H1 (cell line): ENCODE measurements at regions of chr1 and their contacts with region 1.

Region 1: DNA sequence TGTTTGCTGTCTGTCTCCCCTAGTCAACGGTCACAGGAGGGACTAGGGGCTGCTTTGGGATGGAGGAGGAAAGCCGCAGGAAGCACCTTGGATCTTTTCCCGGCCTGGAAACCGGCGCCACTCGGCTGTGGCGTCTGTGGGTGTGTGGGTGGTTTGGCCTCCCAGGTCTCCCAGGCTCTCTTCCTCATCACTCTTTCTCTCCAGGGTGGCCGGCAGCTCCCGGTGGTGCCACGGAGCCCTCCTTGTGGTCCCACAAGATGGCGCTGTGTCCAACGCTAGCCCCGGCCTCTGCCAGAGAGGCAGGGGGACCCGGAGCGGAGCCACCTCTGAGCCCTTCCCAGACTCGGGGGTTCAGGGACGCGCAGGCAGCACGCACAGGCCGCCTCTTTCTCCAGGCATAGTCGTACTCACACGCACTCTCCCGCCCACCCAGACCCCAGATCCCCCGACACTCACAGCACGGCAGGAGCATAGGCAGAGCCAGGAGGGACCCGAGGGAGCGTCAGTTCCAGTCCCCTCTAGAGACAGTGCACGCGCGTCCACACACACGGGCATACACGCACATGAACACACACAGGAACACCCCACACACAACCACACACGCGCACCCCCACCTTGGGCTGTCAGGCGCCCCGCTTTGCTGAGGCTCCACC is 31.2 kb downstream of the CDCP2 start:
- DNase-seq: peak; percentile 56 to 94
- H3K4me3 ChIP-seq: peak overlapping the region; percentile 1 to 45 (median 17); a peak in 5 of 8 replicates
- H3K27ac ChIP-seq: no peak overlapping the region
- H3K4me1 ChIP-seq: peaks cover 7 to 24% (median 15%) of the 10 kb centered on the region in 4 experiments
- H3K27me3 ChIP-seq: peaks cover 0 to 11% (median 8%) of the 10 kb centered on the region in 4 experiments; a peak in 5 of 7 replicates
- CTCF ChIP-seq: peak; percentile 78 to 85 (median 84)
- EP300 ChIP-seq: no peak
- POLR2A ChIP-seq: peak in 1 of 2 experiments; percentile 36; a peak in 1 of 3 replicates
- RAD21 ChIP-seq: peak; percentile 83 to 92

Region 2: GRCh38 chr1:54016313-54017262 is 105.0 kb before region 1 on chr1:
- CTCF ChIA-PET with region 1: no interaction called
- POLR2A ChIA-PET with region 1: no interaction called
- DNase-seq: peak in 1 of 2 experiments; percentile 41
- H3K4me3 ChIP-seq: no peak overlapping the region
- H3K27ac ChIP-seq: no peak overlapping the region
- H3K4me1 ChIP-seq: peaks cover 0 to 3% (median 0%) of the 10 kb centered on the region in 4 experiments; a peak in 1 of 7 replicates
- H3K27me3 ChIP-seq: no peaks in the 10 kb centered on the region
- CTCF ChIP-seq: no peak
- EP300 ChIP-seq: no peak
- POLR2A ChIP-seq: no peak
- RAD21 ChIP-seq: no peak

Region 3: GRCh38 chr1:54070171-54070837 is 51.3 kb before region 1 on chr1:
- CTCF ChIA-PET with region 1: interaction called, 14 read pairs
- POLR2A ChIA-PET with region 1: no interaction called
- DNase-seq: no peak
- H3K4me3 ChIP-seq: no peak overlapping the region
- H3K27ac ChIP-seq: no peak overlapping the region
- H3K4me1 ChIP-seq: no peaks in the 10 kb centered on the region
- H3K27me3 ChIP-seq: no peaks in the 10 kb centered on the region
- CTCF ChIP-seq: peak in 2 of 3 experiments; percentile 60 to 93; a peak in 3 of 4 replicates
- EP300 ChIP-seq: no peak
- POLR2A ChIP-seq: no peak
- RAD21 ChIP-seq: peak; percentile 57 to 73

Region 4: GRCh38 chr1:54110996-54111395 is 10.6 kb before region 1 on chr1:
- CTCF ChIA-PET with region 1: interaction called, 11 read pairs
- POLR2A ChIA-PET with region 1: no interaction called
- DNase-seq: peak in 1 of 2 experiments; percentile 37
- H3K4me3 ChIP-seq: no peak overlapping the region
- H3K27ac ChIP-seq: no peak overlapping the region
- H3K4me1 ChIP-seq: no peaks in the 10 kb centered on the region; a peak in 1 of 7 replicates
- H3K27me3 ChIP-seq: no peaks in the 10 kb centered on the region; a peak in 1 of 7 replicates
- CTCF ChIP-seq: no peak
- EP300 ChIP-seq: no peak
- POLR2A ChIP-seq: no peak
- RAD21 ChIP-seq: no peak

Region 5: GRCh38 chr1:54137514-54138061 is 16.0 kb after region 1 on chr1:
- CTCF ChIA-PET with region 1: interaction called, 110 read pairs
- POLR2A ChIA-PET with region 1: interaction called, 9 read pairs
- DNase-seq: no peak
- H3K4me3 ChIP-seq: no peak overlapping the region
- H3K27ac ChIP-seq: no peak overlapping the region
- H3K4me1 ChIP-seq: peaks cover 12 to 29% (median 18%) of the 10 kb centered on the region in 4 experiments
- H3K27me3 ChIP-seq: no peaks in the 10 kb centered on the region
- CTCF ChIP-seq: no peak
- EP300 ChIP-seq: no peak
- POLR2A ChIP-seq: no peak
- RAD21 ChIP-seq: no peak

Region 6: DNA sequence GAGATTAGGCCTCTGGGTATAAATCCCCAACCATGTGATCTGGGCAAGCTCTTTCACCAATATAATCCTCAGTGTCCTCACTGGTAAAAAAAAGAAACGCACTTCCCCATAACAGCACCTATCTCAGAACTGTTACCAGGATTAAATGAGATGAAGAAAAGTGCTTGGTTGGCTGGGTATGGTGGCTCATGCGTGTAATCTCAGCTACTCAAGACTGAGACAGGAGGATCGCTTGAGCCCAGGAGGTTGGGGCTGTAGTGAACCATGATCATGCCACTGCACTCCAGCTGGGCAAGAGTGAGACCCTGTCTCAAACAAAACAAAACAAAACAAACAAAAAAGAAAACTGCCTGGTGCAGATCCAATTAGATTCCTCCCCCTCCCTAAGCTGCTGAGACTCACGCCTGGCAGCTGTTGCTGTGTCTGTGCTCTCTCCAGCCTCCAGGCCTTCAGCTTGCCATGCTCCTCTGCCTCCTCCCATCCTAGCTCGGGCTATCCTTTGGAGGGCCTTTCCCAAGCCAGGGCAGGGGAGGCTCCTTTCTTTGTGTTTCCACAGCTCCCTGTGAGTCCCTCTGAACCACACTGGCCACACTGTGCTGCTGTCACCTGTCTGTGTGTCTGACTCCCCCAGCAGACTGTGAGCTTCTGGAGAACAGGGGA is 59.2 kb after region 1 on chr1:
- CTCF ChIA-PET with region 1: interaction called, 55 read pairs
- POLR2A ChIA-PET with region 1: no interaction called
- DNase-seq: no peak
- H3K4me3 ChIP-seq: no peak overlapping the region
- H3K27ac ChIP-seq: no peak overlapping the region
- H3K4me1 ChIP-seq: no peaks in the 10 kb centered on the region
- H3K27me3 ChIP-seq: no peaks in the 10 kb centered on the region
- CTCF ChIP-seq: no peak
- EP300 ChIP-seq: no peak
- POLR2A ChIP-seq: no peak
- RAD21 ChIP-seq: no peak